Heart right ventricle (tissue), 16 donors: ENCODE measurements at regions of chr11 and their contacts with region 1.

Region 1: GRCh38 chr11:32908619-32909018 is 16.0 kb downstream of the QSER1 start:
- DNase-seq: no peak
- ATAC-seq: no peak
- H3K4me3 ChIP-seq: no peak overlapping the region
- H3K27ac ChIP-seq: no peak overlapping the region
- H3K4me1 ChIP-seq: peaks cover 0 to 18% (median 8%) of the 10 kb centered on the region in 9 donors
- H3K27me3 ChIP-seq: no peaks in the 10 kb centered on the region
- CTCF ChIP-seq: no peak

Region 2: GRCh38 chr11:32919338-32919737 is 10.7 kb after region 1 on chr11:
- intact Hi-C with region 1: loop called in 1 of 10 experiments (anchors 1 kb)
- DNase-seq: no peak
- ATAC-seq: no peak
- H3K4me3 ChIP-seq: no peak overlapping the region
- H3K27ac ChIP-seq: no peak overlapping the region
- H3K4me1 ChIP-seq: peaks cover 0 to 3% (median 0%) of the 10 kb centered on the region in 9 donors
- H3K27me3 ChIP-seq: no peaks in the 10 kb centered on the region
- CTCF ChIP-seq: no peak